Ascending aorta (tissue), 2 donors: ENCODE measurements at regions of chr7 and their contacts with region 1.

Region 1: DNA sequence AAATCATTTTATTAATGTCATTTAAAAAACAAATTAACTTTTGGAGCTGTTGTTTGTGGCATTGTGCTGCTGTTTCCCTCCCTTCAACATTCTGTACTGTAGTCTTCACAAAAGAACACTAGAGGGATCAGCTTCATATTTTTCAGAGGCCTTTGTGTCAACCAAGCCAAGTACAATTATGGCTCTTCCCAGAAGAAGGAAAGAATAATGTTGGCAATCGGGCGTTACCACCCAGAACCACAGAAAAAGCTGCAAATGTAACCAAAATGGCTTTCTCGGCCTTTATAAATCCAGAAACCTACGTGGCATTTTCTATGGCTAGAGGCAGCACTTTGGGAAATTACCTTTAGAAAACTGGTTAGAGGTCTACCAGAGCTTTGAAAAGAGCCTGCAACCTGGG is 98.8 kb upstream of the COL1A2 start:
- DNase-seq: no peak
- H3K4me3 ChIP-seq: peak overlapping the region; percentile 37 to 61
- H3K27ac ChIP-seq: peak overlapping the region; percentile 86
- H3K4me1 ChIP-seq: peaks cover 8 to 41% of the 10 kb centered on the region in 2 donors
- H3K27me3 ChIP-seq: no peaks in the 10 kb centered on the region
- CTCF ChIP-seq: peak; percentile 51 to 74 (median 69)

Region 2: DNA sequence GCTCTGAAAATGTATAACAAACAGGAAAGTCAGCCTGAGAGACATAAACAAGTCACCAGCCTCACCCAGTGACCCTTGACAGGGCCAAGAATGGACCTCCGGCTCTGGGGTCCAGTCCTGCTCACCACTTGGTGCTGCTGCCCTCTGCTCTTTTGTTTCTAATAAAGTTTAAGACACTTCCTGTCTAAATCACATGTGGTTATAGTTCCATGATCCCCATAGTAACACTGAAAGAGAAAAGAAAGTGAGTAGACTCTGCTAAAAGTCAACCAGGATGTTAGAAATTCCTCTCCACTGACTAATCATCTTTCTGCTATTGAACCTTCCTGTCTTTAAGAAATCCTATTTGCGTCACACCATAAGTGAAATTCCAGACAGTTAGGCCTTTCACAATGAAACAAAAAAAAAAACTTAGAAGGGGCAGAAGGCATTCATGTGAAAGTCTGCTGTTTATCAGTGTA is 112.5 kb before region 1 on chr7:
- intact Hi-C with region 1: loop called (anchors 5 kb)
- DNase-seq: no peak
- H3K4me3 ChIP-seq: no peak overlapping the region
- H3K27ac ChIP-seq: peak overlapping the region; percentile 65 to 79
- H3K4me1 ChIP-seq: peaks cover 0 to 7% of the 10 kb centered on the region in 2 donors
- H3K27me3 ChIP-seq: no peaks in the 10 kb centered on the region
- CTCF ChIP-seq: no peak

Region 3: DNA sequence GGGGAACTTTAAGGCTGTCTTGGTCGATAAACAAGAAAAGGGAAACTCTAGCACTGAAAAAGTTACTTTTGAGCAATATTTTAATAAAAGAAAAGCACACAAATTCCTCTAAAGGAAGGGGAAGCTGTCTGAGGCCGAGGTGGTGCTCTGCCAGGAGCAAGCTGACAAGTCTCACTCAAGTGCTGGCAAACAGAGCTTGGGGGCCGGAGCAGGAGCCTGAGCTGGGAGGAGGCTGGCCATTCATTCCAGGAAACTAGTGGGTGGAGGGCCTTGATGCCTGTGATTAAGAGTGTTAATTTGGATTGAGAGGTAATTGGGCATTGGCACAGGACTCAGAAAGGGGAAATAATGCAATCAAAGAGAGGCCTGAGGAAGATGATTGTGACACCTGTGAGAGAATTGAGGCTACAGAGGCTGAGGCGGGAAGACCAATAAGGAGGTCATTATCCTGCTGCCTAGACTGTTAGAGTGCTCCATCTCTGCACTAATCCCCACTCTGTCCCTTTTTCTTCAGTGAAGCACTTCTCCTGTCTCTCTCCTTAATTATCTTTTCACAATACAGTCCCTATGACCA is 56.1 kb before region 1 on chr7:
- intact Hi-C with region 1: no loop called
- DNase-seq: no peak
- H3K4me3 ChIP-seq: no peak overlapping the region
- H3K27ac ChIP-seq: no peak overlapping the region
- H3K4me1 ChIP-seq: no peaks in the 10 kb centered on the region
- H3K27me3 ChIP-seq: no peaks in the 10 kb centered on the region
- CTCF ChIP-seq: no peak

Region 4: GRCh38 chr7:94374721-94375566 is 79.1 kb after region 1 on chr7:
- intact Hi-C with region 1: loop called (anchors 1 kb)
- DNase-seq: peak in 1 of 2 donors; percentile 84
- H3K4me3 ChIP-seq: peak overlapping the region; percentile 39 to 51
- H3K27ac ChIP-seq: peak overlapping the region; percentile 91 to 92
- H3K4me1 ChIP-seq: peaks cover 4 to 15% of the 10 kb centered on the region in 2 donors
- H3K27me3 ChIP-seq: no peaks in the 10 kb centered on the region
- CTCF ChIP-seq: no peak